Mammary epithelial cell (primary cell): ENCODE measurements at regions of chr2 and their contacts with region 1.

Region 1: GRCh38 chr2:60881047-60881932 is at the start of gene REL:
- DNase-seq: peak; percentile 91
- H3K4me3 ChIP-seq: peak within 1 kb of the TSS; percentile 71 to 98 (median 85)
- H3K27ac ChIP-seq: peak within 1 kb of the TSS; percentile 100
- H3K4me1 ChIP-seq: peaks cover 11% of the 10 kb centered on the region
- H3K27me3 ChIP-seq: no peaks in the 10 kb centered on the region
- CTCF ChIP-seq: peak in 1 of 2 donors; percentile 12
- total RNA-seq, gene REL: 14.5 to 15.0 TPM

Region 2: DNA sequence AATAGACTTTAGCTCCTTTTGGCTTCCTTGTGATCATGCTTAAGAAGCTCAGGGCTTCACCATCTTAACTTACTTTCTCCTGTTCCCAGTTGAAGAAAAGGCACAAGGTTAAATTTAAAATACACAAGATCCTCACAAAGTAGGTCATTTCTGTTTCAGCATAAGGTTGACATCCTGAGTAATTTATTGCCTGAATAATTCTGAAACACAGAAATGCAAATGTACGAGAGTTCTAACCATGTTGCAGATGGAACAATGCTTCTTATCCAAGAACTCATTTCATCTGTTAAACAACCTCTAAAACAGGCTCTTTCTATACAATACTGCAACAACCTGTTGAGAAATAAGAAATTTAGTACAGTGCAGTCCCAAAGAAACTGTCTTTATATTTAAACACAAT is 723.0 kb before region 1 on chr2:
- CTCF ChIA-PET with region 1: no interaction called
- dilution Hi-C with region 1: no loop called
- in situ Hi-C with region 1: no loop called
- intact Hi-C with region 1: no loop called
- DNase-seq: no peak
- H3K4me3 ChIP-seq: no peak overlapping the region
- H3K27ac ChIP-seq: no peak overlapping the region
- H3K4me1 ChIP-seq: no peaks in the 10 kb centered on the region
- H3K27me3 ChIP-seq: no peaks in the 10 kb centered on the region
- CTCF ChIP-seq: no peak

Region 3: GRCh38 chr2:60725466-60725865 is 155.8 kb before region 1 on chr2:
- CTCF ChIA-PET with region 1: no interaction called
- dilution Hi-C with region 1: no loop called
- in situ Hi-C with region 1: no loop called
- intact Hi-C with region 1: no loop called
- DNase-seq: no peak
- H3K4me3 ChIP-seq: no peak overlapping the region
- H3K27ac ChIP-seq: no peak overlapping the region
- H3K4me1 ChIP-seq: no peaks in the 10 kb centered on the region
- H3K27me3 ChIP-seq: peaks cover 2% of the 10 kb centered on the region
- CTCF ChIP-seq: no peak

Region 4: DNA sequence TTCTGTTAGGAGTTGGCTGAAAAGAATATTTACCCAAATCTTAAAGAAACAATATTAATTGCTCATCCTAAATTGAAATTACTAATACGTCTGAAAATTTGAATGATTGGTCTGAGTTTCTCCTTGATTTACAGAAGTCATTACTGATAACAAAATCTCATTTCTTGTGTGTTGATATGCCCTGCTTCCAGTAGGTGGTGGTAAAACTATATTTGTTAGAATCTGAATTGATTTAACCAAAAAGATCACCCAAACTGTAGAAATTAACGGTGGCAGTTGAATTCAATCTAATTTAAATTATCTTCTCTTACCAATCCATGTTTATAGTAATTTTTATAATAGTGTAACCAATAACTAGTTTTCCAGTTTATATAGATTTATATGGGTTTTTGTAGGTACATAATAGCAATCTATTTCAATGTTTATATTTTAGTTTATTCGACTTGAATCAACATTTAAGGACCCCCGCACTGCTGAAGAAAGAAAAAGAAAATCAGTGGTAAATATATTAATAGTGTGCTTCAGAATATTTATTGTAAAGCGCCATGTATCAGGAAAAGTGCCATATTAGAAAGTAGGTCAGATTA is 86.9 kb before region 1 on chr2:
- CTCF ChIA-PET with region 1: no interaction called
- dilution Hi-C with region 1: no loop called
- in situ Hi-C with region 1: no loop called
- intact Hi-C with region 1: loop called (anchors 1 kb)
- DNase-seq: no peak
- H3K4me3 ChIP-seq: no peak overlapping the region
- H3K27ac ChIP-seq: no peak overlapping the region
- H3K4me1 ChIP-seq: no peaks in the 10 kb centered on the region
- H3K27me3 ChIP-seq: no peaks in the 10 kb centered on the region
- CTCF ChIP-seq: peak; percentile 36 to 49

Region 5: DNA sequence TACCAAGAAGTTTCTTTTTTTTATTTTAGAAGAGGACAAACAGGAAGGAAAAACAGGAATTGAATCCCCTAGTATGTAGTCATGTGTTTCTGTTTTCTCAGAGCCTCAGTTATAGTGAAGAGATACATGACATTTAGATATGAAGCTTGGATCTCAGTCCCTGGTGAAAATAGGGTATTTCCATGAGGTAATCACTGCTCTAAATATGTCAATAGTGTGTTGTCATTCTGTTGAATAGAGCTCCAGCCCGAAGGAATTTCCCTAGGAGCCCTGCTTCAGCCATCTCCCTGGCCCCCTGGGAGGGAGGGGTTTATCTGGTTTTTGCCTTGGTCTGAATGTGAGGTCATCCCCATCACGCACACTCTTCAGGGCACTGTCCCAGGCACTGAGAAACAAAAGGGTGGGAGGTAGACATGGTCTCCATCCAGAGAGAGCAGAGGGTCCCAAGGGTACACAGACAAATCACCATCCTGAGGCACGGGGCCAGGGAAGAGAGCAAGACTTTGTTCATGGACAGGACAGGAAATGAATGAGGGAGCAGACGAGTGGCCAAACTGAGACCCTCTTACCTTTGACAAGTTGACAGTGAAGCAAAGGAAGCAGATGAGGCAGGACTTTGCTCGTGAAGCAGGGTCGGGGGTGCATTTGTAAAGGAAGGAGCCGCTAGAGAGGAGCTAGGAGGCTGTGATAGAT is 46.9 kb before region 1 on chr2:
- CTCF ChIA-PET with region 1: no interaction called
- dilution Hi-C with region 1: no loop called
- in situ Hi-C with region 1: no loop called
- intact Hi-C with region 1: loop called (anchors 5 kb)
- DNase-seq: no peak
- H3K4me3 ChIP-seq: no peak overlapping the region
- H3K27ac ChIP-seq: no peak overlapping the region
- H3K4me1 ChIP-seq: peaks cover 14% of the 10 kb centered on the region
- H3K27me3 ChIP-seq: no peaks in the 10 kb centered on the region
- CTCF ChIP-seq: no peak

Region 6: DNA sequence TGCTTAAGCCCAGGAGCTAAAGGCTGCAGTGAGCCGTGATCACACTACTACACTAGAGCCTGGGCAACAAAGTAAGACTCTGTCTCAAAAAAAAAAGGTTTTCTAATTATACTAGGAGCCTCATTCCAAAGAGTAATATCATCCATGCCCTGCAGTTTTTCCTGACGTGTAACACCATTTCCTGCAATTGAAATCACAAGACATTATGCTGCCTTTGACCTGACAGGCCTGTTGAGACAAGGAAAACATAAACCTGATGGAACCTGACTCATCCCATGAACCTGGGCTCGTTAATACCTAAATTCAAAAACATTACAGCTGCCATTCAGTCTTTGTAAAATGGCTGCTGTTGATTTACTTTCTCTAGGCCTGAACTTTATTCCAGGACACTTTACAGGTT is 77.5 kb after region 1 on chr2:
- CTCF ChIA-PET with region 1: interaction called, 9 read pairs
- dilution Hi-C with region 1: no loop called
- in situ Hi-C with region 1: no loop called
- intact Hi-C with region 1: loop called (anchors 1 kb)
- DNase-seq: peak; percentile 98
- H3K4me3 ChIP-seq: no peak overlapping the region
- H3K27ac ChIP-seq: peak overlapping the region; percentile 96
- H3K4me1 ChIP-seq: peaks cover 45% of the 10 kb centered on the region
- H3K27me3 ChIP-seq: no peaks in the 10 kb centered on the region
- CTCF ChIP-seq: no peak